ENCODE measurements at regions of chr12 and their contacts with region 1.

Region 1: GRCh38 chr12:111268738-111269572 is 99.9 kb downstream of the PHETA1 start:
- DNase-seq: peak in 1 of 2 experiments; percentile 81
- H3K4me3 ChIP-seq: no peak overlapping the region
- H3K27ac ChIP-seq: no peak overlapping the region
- H3K4me1 ChIP-seq: no peaks in the 10 kb centered on the region
- H3K27me3 ChIP-seq: no peaks in the 10 kb centered on the region
- CTCF ChIP-seq: peak; percentile 83 to 93 (median 86)
- EP300 ChIP-seq: no peak
- POLR2A ChIP-seq: no peak
- RAD21 ChIP-seq: peak; percentile 62 to 75

Region 2: DNA sequence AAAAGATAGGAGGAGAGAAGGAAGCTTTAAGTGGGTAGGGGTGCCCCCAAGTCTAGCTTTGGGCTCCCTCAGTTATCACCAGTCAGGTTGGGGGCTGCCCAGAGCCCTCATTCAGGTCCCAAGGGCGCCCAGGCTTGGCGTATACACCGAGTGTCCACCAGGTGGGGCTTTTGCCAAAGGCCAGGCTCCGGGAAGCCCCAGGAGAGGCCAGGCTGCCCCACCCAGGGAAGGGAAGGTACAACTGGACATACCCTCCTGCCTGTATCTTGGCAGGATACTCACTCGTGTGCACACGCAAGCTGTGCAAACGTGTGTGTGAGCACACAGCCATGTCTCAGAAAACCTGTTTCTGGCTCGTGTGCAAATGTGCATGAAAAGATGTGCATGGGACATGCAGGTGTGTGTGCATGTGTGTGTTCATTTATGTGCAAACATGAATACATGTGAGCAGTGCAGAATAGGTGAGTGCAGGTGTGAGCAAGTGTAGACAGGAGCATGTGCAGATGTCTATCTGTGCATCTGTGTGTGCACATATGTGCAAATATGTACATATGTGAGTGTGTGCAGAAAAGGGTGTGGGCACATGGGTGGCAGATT is 244.7 kb before region 1 on chr12:
- CTCF ChIA-PET with region 1: interaction called, 18 read pairs
- POLR2A ChIA-PET with region 1: no interaction called
- DNase-seq: peak in 1 of 2 experiments; percentile 90
- H3K4me3 ChIP-seq: no peak overlapping the region
- H3K27ac ChIP-seq: no peak overlapping the region
- H3K4me1 ChIP-seq: no peaks in the 10 kb centered on the region; a peak in 2 of 7 replicates
- H3K27me3 ChIP-seq: peaks cover 0 to 2% (median 0%) of the 10 kb centered on the region in 4 experiments; a peak in 3 of 7 replicates
- CTCF ChIP-seq: peak; percentile 83 to 97 (median 93)
- EP300 ChIP-seq: no peak
- POLR2A ChIP-seq: no peak
- RAD21 ChIP-seq: peak; percentile 95 to 97

Region 3: GRCh38 chr12:111242184-111242583 is 26.8 kb before region 1 on chr12:
- CTCF ChIA-PET with region 1: interaction called, 11 read pairs
- POLR2A ChIA-PET with region 1: no interaction called
- DNase-seq: no peak
- H3K4me3 ChIP-seq: no peak overlapping the region
- H3K27ac ChIP-seq: no peak overlapping the region
- H3K4me1 ChIP-seq: no peaks in the 10 kb centered on the region
- H3K27me3 ChIP-seq: no peaks in the 10 kb centered on the region; a peak in 1 of 7 replicates
- CTCF ChIP-seq: no peak
- EP300 ChIP-seq: no peak
- POLR2A ChIP-seq: no peak
- RAD21 ChIP-seq: no peak

Region 4: GRCh38 chr12:111248236-111249017 is 20.5 kb before region 1 on chr12:
- CTCF ChIA-PET with region 1: interaction called, 11 read pairs
- POLR2A ChIA-PET with region 1: no interaction called
- DNase-seq: no peak
- H3K4me3 ChIP-seq: no peak overlapping the region
- H3K27ac ChIP-seq: no peak overlapping the region
- H3K4me1 ChIP-seq: peaks cover 0 to 5% (median 2%) of the 10 kb centered on the region in 4 experiments; a peak in 4 of 7 replicates
- H3K27me3 ChIP-seq: no peaks in the 10 kb centered on the region
- CTCF ChIP-seq: no peak
- EP300 ChIP-seq: no peak
- POLR2A ChIP-seq: no peak
- RAD21 ChIP-seq: no peak

Region 5: GRCh38 chr12:111256629-111257434 is 12.1 kb before region 1 on chr12:
- CTCF ChIA-PET with region 1: interaction called, 82 read pairs
- POLR2A ChIA-PET with region 1: no interaction called
- DNase-seq: no peak
- H3K4me3 ChIP-seq: no peak overlapping the region
- H3K27ac ChIP-seq: no peak overlapping the region
- H3K4me1 ChIP-seq: no peaks in the 10 kb centered on the region
- H3K27me3 ChIP-seq: no peaks in the 10 kb centered on the region
- CTCF ChIP-seq: no peak
- EP300 ChIP-seq: no peak
- POLR2A ChIP-seq: no peak
- RAD21 ChIP-seq: no peak

Region 6: DNA sequence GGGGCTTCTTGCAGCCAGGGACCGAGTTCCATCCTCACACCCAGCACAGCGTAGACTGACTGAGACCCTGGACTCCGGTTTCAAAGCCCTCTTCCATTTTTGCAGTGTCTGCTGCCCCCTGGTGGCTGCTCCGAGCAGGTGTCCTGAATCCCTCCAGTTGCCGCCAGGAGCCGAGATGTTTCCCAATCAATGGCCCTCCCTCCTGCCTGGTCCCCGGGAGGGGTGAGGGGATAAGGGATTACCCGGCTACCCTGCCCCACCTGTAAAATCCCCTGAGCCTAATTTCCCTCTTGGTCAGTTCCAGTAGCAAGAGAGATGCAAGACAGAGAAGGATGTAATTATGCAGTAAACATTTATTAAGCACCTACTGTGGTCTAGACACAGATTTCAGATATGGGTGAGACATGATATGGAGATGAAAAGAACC is 44.9 kb after region 1 on chr12:
- CTCF ChIA-PET with region 1: interaction called, 17 read pairs
- POLR2A ChIA-PET with region 1: no interaction called
- DNase-seq: peak; percentile 73 to 95
- H3K4me3 ChIP-seq: no peak overlapping the region
- H3K27ac ChIP-seq: no peak overlapping the region
- H3K4me1 ChIP-seq: no peaks in the 10 kb centered on the region
- H3K27me3 ChIP-seq: no peaks in the 10 kb centered on the region
- CTCF ChIP-seq: peak; percentile 90 to 97 (median 97)
- EP300 ChIP-seq: no peak
- POLR2A ChIP-seq: no peak
- RAD21 ChIP-seq: peak; percentile 89 to 92